AG04450 (cell line): ENCODE measurements at regions of chr12 and their contacts with region 1.

Region 1: GRCh38 chr12:111812881-111813741 is 28.9 kb upstream of the MAPKAPK5 start:
- DNase-seq: peak; percentile 51
- H3K4me3 ChIP-seq: no peak overlapping the region
- H3K27ac ChIP-seq: no peak overlapping the region
- H3K27me3 ChIP-seq: no peaks in the 10 kb centered on the region
- CTCF ChIP-seq: peak; percentile 85

Region 2: GRCh38 chr12:111546171-111546570 is 266.9 kb before region 1 on chr12:
- CTCF ChIA-PET with region 1: interaction called, 10 read pairs
- POLR2A ChIA-PET with region 1: no interaction called
- DNase-seq: no peak
- H3K4me3 ChIP-seq: no peak overlapping the region
- H3K27ac ChIP-seq: no peak overlapping the region
- H3K27me3 ChIP-seq: no peaks in the 10 kb centered on the region
- CTCF ChIP-seq: no peak

Region 3: DNA sequence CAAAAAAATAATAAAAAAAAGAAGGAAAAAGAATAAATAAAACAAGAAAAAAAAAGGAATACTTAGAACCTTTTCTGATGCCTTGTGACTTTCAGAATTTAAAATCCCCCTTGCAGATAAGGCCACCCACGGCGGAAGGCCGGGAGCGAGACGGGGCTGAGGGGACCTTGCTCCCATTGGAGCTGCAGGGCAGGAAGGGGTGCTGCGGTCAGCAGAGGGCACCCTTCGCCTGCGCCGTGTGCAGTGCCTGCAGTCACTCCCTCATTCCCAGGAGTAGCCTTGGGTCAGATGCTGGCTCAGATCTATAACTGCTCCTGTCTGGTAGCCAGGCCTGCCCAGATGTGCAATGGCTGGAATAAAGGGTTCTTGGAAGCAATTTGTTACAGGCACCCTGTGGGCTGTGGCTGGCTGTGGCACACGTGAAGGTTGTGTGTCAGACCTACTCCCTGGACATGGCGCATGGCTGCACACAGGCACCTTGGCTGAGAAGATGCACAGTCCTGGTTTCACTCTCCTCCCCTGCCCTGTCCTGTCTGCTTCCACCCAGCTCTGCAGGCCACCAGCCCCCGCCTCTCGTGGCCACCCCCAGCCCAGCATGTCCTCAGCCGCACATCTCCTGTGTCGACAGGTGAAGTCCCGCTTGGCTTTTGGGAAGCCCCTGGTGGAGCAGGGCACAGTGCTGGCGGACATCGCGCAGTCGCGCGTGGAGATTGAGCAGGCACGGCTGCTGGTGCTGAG is 59.8 kb before region 1 on chr12:
- CTCF ChIA-PET with region 1: interaction called, 145 read pairs
- POLR2A ChIA-PET with region 1: no interaction called
- DNase-seq: peak; percentile 39
- H3K4me3 ChIP-seq: no peak overlapping the region
- H3K27ac ChIP-seq: no peak overlapping the region
- H3K27me3 ChIP-seq: no peaks in the 10 kb centered on the region
- CTCF ChIP-seq: peak; percentile 88

Region 4: DNA sequence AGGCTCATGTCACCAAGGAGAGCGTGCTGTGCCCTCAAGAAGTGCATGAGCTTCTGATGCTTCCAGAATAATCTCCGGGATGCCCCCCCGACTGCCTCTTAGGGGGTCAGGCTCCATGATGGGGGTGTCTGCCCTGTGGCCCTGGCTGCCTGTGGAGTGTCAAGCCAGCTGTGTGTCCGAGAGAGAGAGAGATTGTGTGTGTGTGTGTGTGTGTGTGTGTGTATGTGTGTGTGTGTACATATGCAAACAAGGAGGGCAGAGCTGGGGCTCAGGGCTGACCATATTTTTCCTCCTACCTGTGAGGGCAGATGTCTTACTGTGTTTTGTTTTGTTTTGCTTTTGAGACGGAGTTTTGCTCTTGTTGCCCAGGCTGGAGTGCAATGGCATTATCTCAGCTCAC is 52.0 kb before region 1 on chr12:
- CTCF ChIA-PET with region 1: interaction called, 16 read pairs
- POLR2A ChIA-PET with region 1: no interaction called
- DNase-seq: no peak
- H3K4me3 ChIP-seq: no peak overlapping the region
- H3K27ac ChIP-seq: no peak overlapping the region
- H3K27me3 ChIP-seq: no peaks in the 10 kb centered on the region
- CTCF ChIP-seq: no peak

Region 5: GRCh38 chr12:111766608-111767361 is 46.3 kb before region 1 on chr12 and contains the start of gene ALDH2:
- CTCF ChIA-PET with region 1: interaction called, 29 read pairs
- POLR2A ChIA-PET with region 1: interaction called, 7 read pairs
- DNase-seq: no peak
- H3K4me3 ChIP-seq: peak within 1 kb of the TSS; percentile 78
- H3K27ac ChIP-seq: peak within 1 kb of the TSS; percentile 39
- H3K27me3 ChIP-seq: no peaks in the 10 kb centered on the region
- CTCF ChIP-seq: no peak
- polyA plus RNA-seq, gene ALDH2: 84.1 and 90.8 TPM in 2 replicates

Region 6: GRCh38 chr12:111927346-111927745 is 114.2 kb after region 1 on chr12:
- CTCF ChIA-PET with region 1: no interaction called
- POLR2A ChIA-PET with region 1: no interaction called
- DNase-seq: no peak
- H3K4me3 ChIP-seq: no peak overlapping the region
- H3K27ac ChIP-seq: no peak overlapping the region
- H3K27me3 ChIP-seq: no peaks in the 10 kb centered on the region
- CTCF ChIP-seq: no peak